ENCODE measurements at regions of chr4 and their contacts with region 1.

Region 1: GRCh38 chr4:140004549-140004895 is 149.5 kb downstream of the MAML3 start:
- DNase-seq: no peak
- ATAC-seq: peak; percentile 81
- H3K4me3 ChIP-seq: peak overlapping the region; percentile 32 to 49
- H3K27ac ChIP-seq: peak overlapping the region; percentile 79
- H3K4me1 ChIP-seq: peaks cover 17% of the 10 kb centered on the region
- H3K27me3 ChIP-seq: no peaks in the 10 kb centered on the region
- CTCF ChIP-seq: no peak

Region 2: GRCh38 chr4:139783741-139784484 is 220.6 kb before region 1 on chr4:
- CTCF ChIA-PET with region 1: interaction called, 11 read pairs
- POLR2A ChIA-PET with region 1: no interaction called
- in situ Hi-C with region 1: no loop called
- intact Hi-C with region 1: no loop called
- DNase-seq: no peak
- ATAC-seq: no peak
- H3K4me3 ChIP-seq: no peak overlapping the region
- H3K27ac ChIP-seq: no peak overlapping the region
- H3K4me1 ChIP-seq: no peaks in the 10 kb centered on the region
- H3K27me3 ChIP-seq: no peaks in the 10 kb centered on the region
- CTCF ChIP-seq: no peak

Region 3: DNA sequence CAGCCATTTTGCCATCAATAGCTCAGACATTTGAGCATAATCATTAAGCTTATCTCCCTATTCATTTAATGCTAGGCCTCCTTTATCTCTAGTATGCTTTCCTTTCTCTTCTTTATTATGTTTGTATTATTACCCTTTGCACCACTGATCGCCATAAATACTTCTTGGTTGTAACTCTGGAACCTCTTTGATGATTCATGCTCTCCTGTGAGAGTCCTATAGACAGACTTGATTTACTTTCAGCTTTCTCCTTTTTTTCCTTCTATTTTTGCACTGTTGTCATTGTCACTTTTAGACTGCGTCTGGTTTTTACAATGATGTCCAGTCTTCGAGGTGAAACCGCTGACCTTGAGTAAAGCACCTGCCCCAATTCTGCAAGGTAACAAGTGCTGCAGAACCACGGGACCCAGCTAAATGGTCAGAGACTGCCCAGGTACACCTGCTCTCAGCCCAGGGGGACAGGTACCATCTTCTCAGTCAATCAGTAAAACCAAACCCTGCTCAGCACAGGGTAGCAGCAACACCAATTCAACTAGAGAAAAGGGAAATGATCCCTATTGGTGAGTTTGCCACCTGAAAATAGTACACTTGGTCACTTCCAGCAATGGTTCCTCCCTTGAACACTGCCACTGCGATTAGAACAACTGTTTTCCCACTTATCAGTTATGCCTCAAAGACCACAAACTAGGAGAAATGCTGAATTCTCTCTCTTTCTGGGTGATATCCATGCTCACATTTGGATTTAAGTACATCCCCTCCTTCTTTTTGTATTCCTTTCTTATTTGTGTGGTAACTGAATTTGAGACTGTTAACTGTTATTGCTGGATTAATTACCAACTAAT is 24.4 kb after region 1 on chr4:
- CTCF ChIA-PET with region 1: no interaction called
- POLR2A ChIA-PET with region 1: no interaction called
- in situ Hi-C with region 1: no loop called
- intact Hi-C with region 1: no loop called
- DNase-seq: no peak
- ATAC-seq: no peak
- H3K4me3 ChIP-seq: no peak overlapping the region
- H3K27ac ChIP-seq: peak overlapping the region; percentile 29; the same call in 1 of the 2 replicates
- H3K4me1 ChIP-seq: no peaks in the 10 kb centered on the region; the same call in 1 of the 2 replicates
- H3K27me3 ChIP-seq: no peaks in the 10 kb centered on the region
- CTCF ChIP-seq: no peak

Region 4: GRCh38 chr4:140044337-140044902 is 39.9 kb after region 1 on chr4:
- CTCF ChIA-PET with region 1: no interaction called
- POLR2A ChIA-PET with region 1: no interaction called
- in situ Hi-C with region 1: no loop called
- intact Hi-C with region 1: loop called (anchors 1 kb)
- DNase-seq: no peak
- ATAC-seq: no peak
- H3K4me3 ChIP-seq: no peak overlapping the region
- H3K27ac ChIP-seq: peak overlapping the region; percentile 15; the same call in 1 of the 2 replicates
- H3K4me1 ChIP-seq: peaks cover 30% of the 10 kb centered on the region
- H3K27me3 ChIP-seq: no peaks in the 10 kb centered on the region
- CTCF ChIP-seq: no peak